Panc1 (cell line): ENCODE measurements at regions of chr14 and their contacts with region 1.

Region 1: GRCh38 chr14:69151315-69152049 is 1.4 kb downstream of the DCAF5 start:
- DNase-seq: no peak
- ATAC-seq: peak; percentile 74
- H3K4me3 ChIP-seq: peak overlapping the region; percentile 66 to 82
- H3K27ac ChIP-seq: peak overlapping the region; percentile 83
- H3K4me1 ChIP-seq: peaks cover 25% of the 10 kb centered on the region
- H3K27me3 ChIP-seq: no peaks in the 10 kb centered on the region
- CTCF ChIP-seq: peak; percentile 77

Region 2: DNA sequence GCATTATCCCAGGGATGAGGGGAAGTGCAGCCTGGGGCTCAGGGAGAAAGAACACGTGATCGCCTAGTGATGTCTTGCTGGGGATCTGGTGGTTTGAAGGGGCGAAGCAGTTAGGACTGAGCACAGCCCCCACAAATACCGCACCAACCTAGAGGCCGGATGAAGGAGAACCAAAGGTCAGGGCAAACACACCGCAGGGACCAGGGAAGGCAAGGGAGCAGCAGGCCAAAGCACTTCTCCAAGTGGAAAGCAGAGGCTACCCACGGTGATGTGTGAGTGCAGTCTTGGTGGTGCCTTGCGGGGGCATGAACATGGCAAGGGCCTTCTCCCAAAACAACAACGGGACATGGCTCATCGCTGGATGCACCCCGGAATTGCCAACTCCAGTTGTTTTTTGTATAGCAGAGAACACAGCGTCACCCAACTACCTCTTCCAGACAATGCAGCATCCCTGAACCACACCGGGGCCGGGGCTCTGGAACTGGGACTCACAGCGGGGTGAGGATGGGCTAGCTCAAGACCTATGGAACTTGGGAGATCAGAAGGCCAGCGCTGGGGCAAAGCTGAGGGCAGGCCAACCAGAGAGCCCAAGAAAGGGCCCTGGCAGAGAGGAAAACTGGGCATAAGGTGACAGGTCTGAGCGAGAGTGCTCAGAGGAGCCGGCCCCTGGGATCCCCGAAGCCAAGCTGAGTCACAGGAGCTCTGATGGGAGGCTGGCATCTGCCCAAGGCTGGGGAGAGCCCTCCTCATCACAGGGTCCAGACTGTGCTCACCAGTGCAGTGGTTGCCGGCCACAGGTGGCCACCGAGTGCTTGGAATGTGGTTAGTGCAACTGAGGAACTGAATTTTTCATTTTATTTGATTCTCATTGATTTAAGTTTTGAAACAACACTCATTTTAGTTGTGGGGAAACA is 119.6 kb after region 1 on chr14:
- CTCF ChIA-PET with region 1: interaction called, 13 read pairs
- POLR2A ChIA-PET with region 1: no interaction called
- in situ Hi-C with region 1: no loop called
- intact Hi-C with region 1: no loop called
- DNase-seq: no peak
- ATAC-seq: no peak
- H3K4me3 ChIP-seq: no peak overlapping the region
- H3K27ac ChIP-seq: no peak overlapping the region
- H3K4me1 ChIP-seq: no peaks in the 10 kb centered on the region
- H3K27me3 ChIP-seq: no peaks in the 10 kb centered on the region
- CTCF ChIP-seq: no peak

Region 3: DNA sequence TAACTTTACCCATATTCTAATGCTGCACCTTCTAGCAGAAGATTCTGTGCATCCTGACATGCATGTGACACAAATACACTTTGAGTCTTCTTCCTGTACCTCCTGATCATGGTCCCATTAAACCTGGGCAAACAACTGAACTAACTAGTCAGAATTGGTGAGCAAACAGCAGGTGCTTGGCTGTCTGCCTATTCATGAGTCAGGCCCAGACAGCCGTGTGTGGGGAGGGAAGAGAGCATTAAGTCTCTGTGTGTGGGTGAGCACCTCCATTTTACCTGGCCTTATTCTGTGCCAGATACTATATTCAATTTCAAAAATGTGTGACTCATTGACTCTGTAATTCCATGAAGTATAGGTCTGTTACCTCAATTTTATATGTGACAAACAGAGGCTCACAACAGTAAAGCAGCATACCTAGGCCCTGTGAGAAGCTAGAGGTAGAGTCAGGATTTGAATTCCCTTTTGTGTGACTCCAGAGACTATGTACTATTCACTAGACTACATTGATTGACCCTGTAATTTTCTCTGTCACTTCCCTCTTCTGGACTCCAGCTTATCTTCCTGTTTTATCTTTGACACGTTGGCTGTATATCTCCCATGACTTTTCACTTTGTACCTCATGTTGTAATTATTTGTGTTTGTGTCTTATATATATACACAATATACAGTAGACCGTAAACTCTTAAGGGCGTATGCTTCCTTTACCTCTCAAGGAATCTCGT is 492.1 kb after region 1 on chr14:
- CTCF ChIA-PET with region 1: no interaction called
- POLR2A ChIA-PET with region 1: no interaction called
- in situ Hi-C with region 1: no loop called
- intact Hi-C with region 1: no loop called
- DNase-seq: peak; percentile 82
- ATAC-seq: peak; percentile 82
- H3K4me3 ChIP-seq: no peak overlapping the region
- H3K27ac ChIP-seq: no peak overlapping the region; the same call in 1 of the 2 replicates
- H3K4me1 ChIP-seq: peaks cover 14% of the 10 kb centered on the region
- H3K27me3 ChIP-seq: no peaks in the 10 kb centered on the region
- CTCF ChIP-seq: no peak